ENCODE measurements at regions of chr14 and their contacts with region 1.

Region 1: DNA sequence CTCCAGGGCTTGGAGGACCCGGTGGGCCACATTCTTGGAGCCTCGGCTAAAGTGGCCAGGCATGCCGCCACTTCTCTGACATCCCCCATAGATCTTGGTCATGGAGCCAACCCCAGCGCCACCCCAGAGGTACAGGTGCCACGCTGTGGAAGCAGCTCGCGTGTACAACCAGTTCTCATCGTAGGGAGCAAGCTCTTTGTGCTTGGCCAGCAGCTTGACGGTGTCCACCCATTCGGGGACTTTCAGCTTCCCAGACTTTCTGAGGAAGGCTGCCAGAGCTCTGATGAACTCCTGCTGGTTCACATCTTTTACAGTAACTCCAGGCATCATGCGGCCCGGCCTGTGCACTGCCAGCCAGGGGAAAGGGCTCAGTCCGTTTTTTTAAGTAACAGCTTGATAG is 29.3 kb upstream of the EAPP start:
- DNase-seq: no peak
- ATAC-seq: no peak
- H3K4me3 ChIP-seq: no peak overlapping the region
- H3K27ac ChIP-seq: no peak overlapping the region
- H3K4me1 ChIP-seq: no peaks in the 10 kb centered on the region
- H3K27me3 ChIP-seq: no peaks in the 10 kb centered on the region
- CTCF ChIP-seq: no peak
- EP300 ChIP-seq: no peak
- POLR2A ChIP-seq: no peak
- RAD21 ChIP-seq: no peak

Region 2: DNA sequence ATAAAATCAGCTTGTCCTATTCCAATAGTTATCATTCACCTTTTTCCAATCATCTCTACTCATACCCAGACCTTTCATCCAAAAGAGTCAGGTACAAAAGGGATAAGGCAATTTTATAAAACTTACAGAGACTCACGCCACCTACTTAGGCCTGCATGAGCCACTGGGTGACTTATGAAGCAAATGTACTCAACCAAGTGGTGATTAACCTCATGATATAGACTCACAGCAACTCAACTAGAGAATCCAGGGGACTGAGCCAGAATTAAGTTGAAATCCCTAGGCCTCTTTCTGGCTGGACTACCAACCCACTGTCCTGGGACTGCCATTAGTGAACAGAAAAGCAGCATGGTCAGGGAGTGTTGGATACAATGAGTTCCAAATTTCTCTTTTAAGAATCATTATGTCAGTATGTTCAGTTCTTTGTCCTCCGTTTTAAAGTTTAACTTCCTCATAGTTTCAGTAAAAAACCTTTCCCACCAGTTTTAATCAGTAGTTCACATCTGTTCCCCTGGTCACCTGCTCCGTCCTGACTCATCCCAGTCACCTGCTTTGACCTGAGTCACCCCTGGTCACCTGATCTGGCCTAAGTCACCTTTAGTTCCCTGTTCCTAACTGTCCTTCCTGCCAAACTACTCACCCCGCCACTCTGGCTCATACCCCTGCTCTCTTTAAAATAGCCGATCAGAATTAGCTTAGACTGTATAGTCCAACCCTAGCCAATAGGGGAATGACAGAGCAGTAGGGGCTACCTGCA is 143.5 kb before region 1 on chr14:
- CTCF ChIA-PET with region 1: no interaction called
- POLR2A ChIA-PET with region 1: no interaction called
- in situ Hi-C with region 1: no loop called
- intact Hi-C with region 1: no loop called
- DNase-seq: peak; percentile 32
- ATAC-seq: no peak
- H3K4me3 ChIP-seq: no peak overlapping the region
- H3K27ac ChIP-seq: no peak overlapping the region
- H3K4me1 ChIP-seq: peaks cover 19% of the 10 kb centered on the region
- H3K27me3 ChIP-seq: 0 out of 5 replicates have a peak, but pooled peaks cover 0 to 6% of the 10 kb centered on the region in 2 experiments
- CTCF ChIP-seq: no peak
- EP300 ChIP-seq: no peak
- POLR2A ChIP-seq: no peak
- RAD21 ChIP-seq: no peak

Region 3: GRCh38 chr14:34629657-34630529 is 61.1 kb after region 1 on chr14 and contains the start of gene SNX6:
- CTCF ChIA-PET with region 1: no interaction called
- POLR2A ChIA-PET with region 1: no interaction called
- in situ Hi-C with region 1: no loop called
- intact Hi-C with region 1: loop called (anchors 10 kb)
- DNase-seq: peak; percentile 78
- ATAC-seq: peak; percentile 97
- H3K4me3 ChIP-seq: peak within 1 kb of the TSS; percentile 95 to 100 (median 99)
- H3K27ac ChIP-seq: peak within 1 kb of the TSS; percentile 81
- H3K4me1 ChIP-seq: peaks cover 39% of the 10 kb centered on the region
- H3K27me3 ChIP-seq: peaks cover 0 to 3% of the 10 kb centered on the region in 2 experiments; a peak in 1 of 5 replicates
- CTCF ChIP-seq: peak; percentile 38; the same call in 1 of the 2 replicates
- EP300 ChIP-seq: no peak; a peak in 1 of 4 replicates
- POLR2A ChIP-seq: peak; percentile 85 to 97
- RAD21 ChIP-seq: peak; percentile 24
- total RNA-seq, gene SNX6: 169 and 318 TPM in 2 replicates